ENCODE measurements at regions of chr17 and their contacts with region 1.

Region 1: DNA sequence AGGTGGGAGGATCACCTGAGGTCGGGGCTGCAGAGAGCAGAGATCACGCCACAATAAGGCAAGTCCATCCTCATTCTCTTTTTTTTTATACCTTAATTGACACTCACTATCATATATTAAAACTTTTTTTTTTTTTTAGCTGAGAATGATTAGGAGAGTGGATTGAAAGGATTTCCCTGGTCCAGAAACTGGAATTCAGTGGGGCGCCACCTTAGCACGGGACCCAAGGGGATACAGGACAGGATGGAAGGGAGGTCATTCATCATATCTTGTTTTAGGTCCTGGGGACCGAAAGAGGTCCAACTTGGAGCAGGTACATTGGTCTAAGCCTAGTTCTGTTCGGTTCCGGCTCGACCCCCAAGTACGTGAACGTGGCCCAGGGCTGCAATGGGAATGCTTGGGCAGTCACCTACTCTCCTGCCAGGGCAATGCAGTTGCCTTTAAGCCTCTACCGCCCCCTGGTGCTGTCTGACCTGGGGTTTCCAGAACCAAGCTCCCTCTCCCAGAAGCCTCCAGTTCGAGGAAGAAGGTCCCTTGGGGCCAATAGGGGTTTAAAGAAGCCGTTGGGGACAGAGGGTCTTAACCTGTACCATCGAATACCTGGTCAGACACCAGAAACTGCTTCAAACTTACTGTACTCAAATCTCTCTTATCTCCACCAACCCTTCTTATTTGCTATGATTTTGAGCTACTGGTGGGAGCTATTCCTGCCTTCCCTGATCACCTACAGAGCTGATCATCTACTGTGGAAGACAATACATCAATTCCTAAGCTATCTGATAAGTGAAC is 19.9 kb upstream of the GPATCH8 start:
- DNase-seq: peak; percentile 83
- ATAC-seq: peak; percentile 90
- H3K4me3 ChIP-seq: no peak overlapping the region
- H3K27ac ChIP-seq: no peak overlapping the region
- H3K4me1 ChIP-seq: no peaks in the 10 kb centered on the region
- H3K27me3 ChIP-seq: no peaks in the 10 kb centered on the region
- CTCF ChIP-seq: peak; percentile 83

Region 2: GRCh38 chr17:44170499-44171201 is 352.4 kb before region 1 on chr17 and contains the start of gene ASB16:
- CTCF ChIA-PET with region 1: no interaction called
- POLR2A ChIA-PET with region 1: interaction called, 15 read pairs
- intact Hi-C with region 1: no loop called
- DNase-seq: no peak
- ATAC-seq: no peak; the same call in 1 of the 2 replicates
- H3K4me3 ChIP-seq: no peak within 1 kb of the TSS
- H3K27ac ChIP-seq: no peak within 1 kb of the TSS
- H3K4me1 ChIP-seq: peaks cover 9% of the 10 kb centered on the region
- H3K27me3 ChIP-seq: no peaks in the 10 kb centered on the region
- CTCF ChIP-seq: no peak
- total RNA-seq, gene ASB16: 0.35 and 0.51 TPM in 2 replicates

Region 3: GRCh38 chr17:44400226-44400847 is 122.7 kb before region 1 on chr17:
- CTCF ChIA-PET with region 1: no interaction called
- POLR2A ChIA-PET with region 1: no interaction called
- intact Hi-C with region 1: loop called (anchors 1 kb)
- DNase-seq: peak; percentile 53
- ATAC-seq: peak; percentile 77
- H3K4me3 ChIP-seq: no peak overlapping the region
- H3K27ac ChIP-seq: no peak overlapping the region
- H3K4me1 ChIP-seq: no peaks in the 10 kb centered on the region
- H3K27me3 ChIP-seq: no peaks in the 10 kb centered on the region
- CTCF ChIP-seq: peak; percentile 88

Region 4: DNA sequence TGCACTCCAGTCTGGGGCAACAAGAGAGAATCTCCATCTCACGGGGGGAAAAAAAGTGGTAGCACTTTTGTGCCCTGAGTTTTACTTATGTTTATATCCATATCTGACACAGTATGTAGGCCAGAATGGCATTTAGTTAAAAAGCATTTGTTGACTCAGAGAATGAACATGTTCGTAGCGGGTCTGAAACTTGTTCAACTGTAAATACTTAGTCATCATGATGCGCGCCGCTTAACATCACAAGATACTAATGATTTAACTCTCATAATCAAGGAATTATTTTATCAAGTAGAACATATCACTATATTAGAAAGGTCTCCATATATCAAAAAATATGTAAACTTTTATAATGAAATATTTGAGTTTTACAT is 78.4 kb before region 1 on chr17:
- CTCF ChIA-PET with region 1: interaction called, 10 read pairs
- POLR2A ChIA-PET with region 1: no interaction called
- intact Hi-C with region 1: no loop called
- DNase-seq: peak; percentile 87
- ATAC-seq: peak; percentile 99
- H3K4me3 ChIP-seq: no peak overlapping the region
- H3K27ac ChIP-seq: peak overlapping the region; percentile 21
- H3K4me1 ChIP-seq: peaks cover 14% of the 10 kb centered on the region
- H3K27me3 ChIP-seq: no peaks in the 10 kb centered on the region
- CTCF ChIP-seq: no peak

Region 5: GRCh38 chr17:44556832-44557606 is 33.9 kb after region 1 on chr17 and contains the start of gene FZD2:
- CTCF ChIA-PET with region 1: no interaction called
- POLR2A ChIA-PET with region 1: no interaction called
- intact Hi-C with region 1: no loop called
- DNase-seq: peak; percentile 98
- ATAC-seq: peak; percentile 90
- H3K4me3 ChIP-seq: peak within 1 kb of the TSS; percentile 84
- H3K27ac ChIP-seq: no peak within 1 kb of the TSS
- H3K4me1 ChIP-seq: peaks cover 23% of the 10 kb centered on the region
- H3K27me3 ChIP-seq: no peaks in the 10 kb centered on the region
- CTCF ChIP-seq: no peak
- total RNA-seq, gene FZD2: 11.6 and 12.8 TPM in 2 replicates

Measured in PC-3 (cell line).